Activated CD4-positive, alpha-beta T cell treated with anti-CD3 and anti-CD28 coated beads for 36 hours (primary cell): ENCODE measurements at regions of chr17 and their contacts with region 1.

Region 1: GRCh38 chr17:8785547-8786413 is 13.4 kb downstream of the MFSD6L start:
- DNase-seq: peak; percentile 79
- ATAC-seq: peak; percentile 61
- H3K4me3 Mint-ChIP-seq: no peak overlapping the region
- H3K27ac Mint-ChIP-seq: no peak overlapping the region
- H3K4me1 Mint-ChIP-seq: no peaks in the 10 kb centered on the region
- H3K27me3 Mint-ChIP-seq: peaks cover 6% of the 10 kb centered on the region

Region 2: DNA sequence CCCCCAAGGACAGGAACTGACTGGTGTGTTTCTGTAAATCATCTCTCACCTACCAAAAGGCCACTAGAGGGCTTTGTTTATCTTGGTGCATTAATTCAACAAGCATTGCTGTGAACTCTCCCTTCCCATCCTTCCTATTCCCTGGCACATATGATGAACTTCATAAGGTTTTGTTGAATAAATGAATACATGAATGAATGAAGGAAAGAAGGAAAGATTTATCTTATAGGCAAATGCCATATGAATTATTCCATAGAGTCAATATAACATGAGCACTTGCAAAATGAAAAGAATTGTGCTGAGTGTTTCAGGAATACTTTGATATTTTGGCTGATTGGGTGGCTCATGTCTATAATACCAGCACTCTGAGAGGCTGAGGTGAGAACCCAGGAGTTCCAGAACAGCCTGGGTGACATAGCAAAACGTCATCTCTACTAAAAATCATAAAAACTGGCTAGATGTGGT is 31.8 kb before region 1 on chr17:
- CTCF ChIA-PET with region 1: interaction called, 5 read pairs
- POLR2A ChIA-PET with region 1: no interaction called
- intact Hi-C with region 1: loop called in 1 of 2 experiments (anchors 2 kb)
- DNase-seq: no peak
- ATAC-seq: no peak
- H3K4me3 Mint-ChIP-seq: no peak overlapping the region
- H3K27ac Mint-ChIP-seq: no peak overlapping the region
- H3K4me1 Mint-ChIP-seq: no peaks in the 10 kb centered on the region
- H3K27me3 Mint-ChIP-seq: peaks cover 15% of the 10 kb centered on the region

Region 3: DNA sequence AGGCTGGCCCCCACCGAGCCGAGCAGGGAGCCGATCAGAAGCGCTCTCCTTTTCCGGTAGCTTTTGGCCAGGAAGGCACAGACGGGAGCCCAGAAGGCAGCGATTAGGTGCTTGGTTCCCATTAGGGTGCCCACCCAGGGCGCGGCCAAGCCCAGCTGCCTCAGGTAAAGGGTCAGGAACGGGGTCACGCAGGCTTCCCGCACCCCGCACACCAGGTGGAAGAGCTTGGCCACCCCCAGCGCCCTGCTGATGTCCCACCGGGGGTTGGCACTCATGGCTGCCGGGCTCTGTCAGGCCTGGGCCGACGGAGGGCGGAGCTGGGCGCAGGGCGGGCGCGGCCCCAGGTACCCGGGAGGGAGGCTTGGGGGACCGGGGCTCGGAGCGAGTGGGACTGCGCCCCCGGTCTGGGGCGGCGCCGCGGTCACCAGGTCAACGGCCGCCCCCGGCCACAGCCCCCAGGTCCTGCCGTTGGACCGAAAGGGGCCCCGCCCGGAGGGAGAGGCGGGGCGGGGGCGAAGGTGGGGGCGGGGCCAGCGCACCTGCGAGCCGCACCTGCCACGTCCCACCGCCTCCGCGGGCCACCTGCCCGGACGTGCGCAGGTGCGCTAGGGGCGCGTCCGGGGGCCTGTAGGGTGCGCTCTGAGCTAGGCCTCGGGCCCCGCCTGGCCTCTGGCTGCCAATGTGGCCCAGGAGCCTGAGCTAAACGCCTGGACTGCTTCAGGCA is 13.2 kb after region 1 on chr17 and contains the start of gene MFSD6L:
- CTCF ChIA-PET with region 1: interaction called, 11 read pairs
- POLR2A ChIA-PET with region 1: no interaction called
- intact Hi-C with region 1: no loop called
- DNase-seq: peak; percentile 37
- ATAC-seq: peak; percentile 49
- H3K4me3 Mint-ChIP-seq: no peak within 1 kb of the TSS
- H3K27ac Mint-ChIP-seq: no peak within 1 kb of the TSS
- H3K4me1 Mint-ChIP-seq: no peaks in the 10 kb centered on the region
- H3K27me3 Mint-ChIP-seq: no peaks in the 10 kb centered on the region
- total RNA-seq, gene MFSD6L: 0.07 TPM